Dorsolateral prefrontal cortex (tissue), 120 donors: ENCODE measurements at regions of chr7 and their contacts with region 1.

Region 1: GRCh38 chr7:7424151-7424873 is 111.4 kb downstream of the COL28A1 start:
- DNase-seq: peak in 7 of 10 donors; percentile 25 to 73 (median 55)
- H3K4me3 ChIP-seq: peak overlapping the region in 57 of 59 donors; percentile 28 to 72 (median 54)
- H3K27ac ChIP-seq: peak overlapping the region in 5 of 59 donors; percentile 10 to 75 (median 38)
- H3K27me3 ChIP-seq: no peaks in the 10 kb centered on the region
- CTCF ChIP-seq: peak; percentile 42 to 92 (median 78)

Region 2: GRCh38 chr7:7103343-7104313 is 320.7 kb before region 1 on chr7:
- intact Hi-C with region 1: loop called (anchors 5 to 10 kb)
- DNase-seq: no peak
- H3K4me3 ChIP-seq: peak overlapping the region in 9 of 59 donors; percentile 2 to 25 (median 10)
- H3K27ac ChIP-seq: no peak overlapping the region
- H3K27me3 ChIP-seq: no peaks in the 10 kb centered on the region
- CTCF ChIP-seq: peak; percentile 49 to 83 (median 72)

Region 3: DNA sequence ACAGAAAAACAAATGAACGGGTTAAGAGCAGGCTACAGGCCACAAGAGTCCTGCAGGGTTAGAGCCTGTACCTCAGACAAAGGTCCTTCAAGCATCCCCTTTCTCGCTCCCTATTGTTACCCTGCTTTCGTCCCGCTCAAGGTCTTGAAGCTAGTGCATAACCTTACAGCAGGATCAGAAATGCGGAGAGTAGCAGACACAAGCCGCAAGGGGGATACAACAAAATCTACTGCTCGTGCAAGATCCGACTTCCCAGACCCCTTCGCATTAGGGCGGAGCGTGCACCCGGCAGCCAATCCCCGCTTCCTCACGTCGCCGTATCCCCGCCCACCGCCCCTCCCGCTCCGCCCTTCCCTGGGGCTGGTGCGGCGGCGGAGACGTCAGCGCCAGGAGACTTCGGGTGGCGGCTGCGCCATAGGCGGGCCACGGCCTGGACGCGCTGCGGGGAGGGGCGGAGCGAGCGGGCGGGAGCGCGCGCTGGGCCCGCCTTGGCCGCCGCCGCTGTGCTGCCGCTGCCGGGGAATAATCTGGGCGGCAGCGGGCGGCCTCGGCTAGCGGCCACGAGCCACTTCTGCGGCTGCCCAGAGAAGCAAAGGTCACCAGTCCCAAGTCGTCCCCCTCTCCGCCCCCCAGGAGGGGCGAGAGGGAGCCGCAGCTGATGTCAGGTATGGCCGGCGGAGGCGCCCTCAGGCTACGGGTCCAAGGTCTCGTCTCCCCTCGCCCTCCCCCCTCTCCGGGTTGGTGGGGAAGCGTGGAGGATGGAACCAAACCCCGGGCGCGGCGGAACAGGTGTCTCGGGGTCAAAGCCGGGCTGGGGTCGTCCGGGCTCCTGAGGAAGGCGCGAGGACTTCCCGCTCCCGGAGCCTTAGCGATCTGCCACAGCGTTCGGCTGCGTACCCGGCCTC is 241.9 kb before region 1 on chr7 and contains the start of gene C1GALT1:
- intact Hi-C with region 1: loop called in 1 of 2 experiments (anchors 2 kb)
- DNase-seq: peak; percentile 91 to 98 (median 96)
- H3K4me3 ChIP-seq: peak within 1 kb of the TSS; percentile 58 to 98 (median 91)
- H3K27ac ChIP-seq: peak within 1 kb of the TSS; percentile 85 to 99 (median 98)
- H3K27me3 ChIP-seq: no peaks in the 10 kb centered on the region
- CTCF ChIP-seq: peak in 52 of 56 donors; percentile 7 to 68 (median 44)
- total RNA-seq, gene C1GALT1: 22.2 to 88.2 (median 37.1) TPM

Region 4: DNA sequence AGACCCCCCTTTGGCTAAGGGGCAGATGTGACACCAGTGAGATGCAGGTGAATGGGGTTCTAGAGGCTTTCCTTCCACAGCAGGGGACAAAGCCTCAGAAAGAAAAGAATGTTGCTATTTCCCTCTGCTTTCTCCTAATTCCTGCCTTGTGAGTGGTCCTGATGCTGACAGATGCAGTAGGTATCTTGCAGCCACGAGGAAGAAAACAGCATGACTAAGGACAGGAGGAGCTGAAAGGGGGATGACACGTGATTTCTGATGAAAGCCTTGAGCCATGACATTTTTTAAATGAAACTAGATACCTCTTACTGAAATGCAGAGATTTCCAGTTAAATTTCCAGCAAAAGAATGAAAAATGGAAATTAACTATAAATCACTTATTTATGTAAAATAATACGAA is 149.5 kb before region 1 on chr7:
- intact Hi-C with region 1: no loop called
- DNase-seq: no peak
- H3K4me3 ChIP-seq: no peak overlapping the region
- H3K27ac ChIP-seq: no peak overlapping the region
- H3K27me3 ChIP-seq: no peaks in the 10 kb centered on the region
- CTCF ChIP-seq: no peak

Region 5: GRCh38 chr7:7498856-7499580 is 74.7 kb after region 1 on chr7:
- intact Hi-C with region 1: no loop called
- DNase-seq: no peak
- H3K4me3 ChIP-seq: no peak overlapping the region
- H3K27ac ChIP-seq: no peak overlapping the region
- H3K27me3 ChIP-seq: no peaks in the 10 kb centered on the region
- CTCF ChIP-seq: no peak

Region 6: GRCh38 chr7:7542251-7542835 is 118.0 kb after region 1 on chr7:
- intact Hi-C with region 1: loop called (anchors 5 kb)
- DNase-seq: no peak
- H3K4me3 ChIP-seq: no peak overlapping the region
- H3K27ac ChIP-seq: no peak overlapping the region
- H3K27me3 ChIP-seq: no peaks in the 10 kb centered on the region
- CTCF ChIP-seq: no peak

Region 7: DNA sequence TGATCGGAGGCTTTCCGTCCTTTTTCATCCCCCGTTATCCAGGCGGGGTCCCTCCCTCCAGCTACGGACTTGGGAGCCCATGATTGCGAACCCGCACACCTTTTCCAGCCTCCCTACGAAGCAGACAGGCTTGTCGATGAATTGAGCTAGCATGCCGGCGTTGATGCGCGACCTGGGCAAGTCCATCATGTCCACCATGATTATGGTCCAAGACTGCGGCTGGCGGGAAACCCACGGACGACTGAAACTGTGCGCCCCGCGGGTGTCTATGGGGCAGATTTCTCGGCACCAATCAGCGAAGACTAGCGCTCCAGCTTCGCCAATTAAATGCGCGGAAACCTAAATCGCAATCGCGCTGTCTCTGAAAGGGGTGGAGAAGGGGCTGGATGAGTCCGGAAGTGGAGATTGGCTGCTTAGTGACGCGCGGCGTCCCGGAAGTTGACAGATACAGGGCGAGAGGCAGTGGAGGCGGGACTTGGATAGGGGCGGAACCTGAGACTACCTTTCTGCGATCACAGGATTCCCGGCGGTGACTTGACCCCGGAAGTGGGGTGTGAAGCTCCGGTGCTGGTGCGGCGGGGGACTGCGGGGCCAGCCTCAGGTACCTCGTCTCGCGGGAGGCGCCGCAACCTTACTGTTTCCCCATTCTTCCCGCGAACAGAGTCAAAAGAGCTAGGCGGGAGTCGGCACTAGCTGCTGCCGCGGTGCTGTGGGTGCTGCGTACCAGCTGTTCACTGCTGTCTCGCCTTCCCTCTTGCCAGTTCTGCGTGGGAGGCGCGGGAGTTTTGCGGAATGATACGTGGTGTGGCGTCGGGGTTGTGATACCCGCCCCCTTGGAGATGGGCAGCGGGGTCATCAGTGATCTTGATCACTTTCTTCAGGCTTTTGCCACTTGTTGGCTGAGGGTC is 216.2 kb after region 1 on chr7 and contains the start of gene UMAD1:
- intact Hi-C with region 1: loop called in 1 of 2 experiments (anchors 10 kb)
- DNase-seq: peak; percentile 98 to 100 (median 99)
- H3K4me3 ChIP-seq: peak within 1 kb of the TSS; percentile 68 to 99 (median 89)
- H3K27ac ChIP-seq: peak within 1 kb of the TSS in 58 of 59 donors; percentile 52 to 94 (median 84)
- H3K27me3 ChIP-seq: no peaks in the 10 kb centered on the region
- CTCF ChIP-seq: peak in 19 of 56 donors; percentile 7 to 44 (median 26)
- total RNA-seq, gene UMAD1: 12.6 to 25.1 (median 18.8) TPM

Region 8: DNA sequence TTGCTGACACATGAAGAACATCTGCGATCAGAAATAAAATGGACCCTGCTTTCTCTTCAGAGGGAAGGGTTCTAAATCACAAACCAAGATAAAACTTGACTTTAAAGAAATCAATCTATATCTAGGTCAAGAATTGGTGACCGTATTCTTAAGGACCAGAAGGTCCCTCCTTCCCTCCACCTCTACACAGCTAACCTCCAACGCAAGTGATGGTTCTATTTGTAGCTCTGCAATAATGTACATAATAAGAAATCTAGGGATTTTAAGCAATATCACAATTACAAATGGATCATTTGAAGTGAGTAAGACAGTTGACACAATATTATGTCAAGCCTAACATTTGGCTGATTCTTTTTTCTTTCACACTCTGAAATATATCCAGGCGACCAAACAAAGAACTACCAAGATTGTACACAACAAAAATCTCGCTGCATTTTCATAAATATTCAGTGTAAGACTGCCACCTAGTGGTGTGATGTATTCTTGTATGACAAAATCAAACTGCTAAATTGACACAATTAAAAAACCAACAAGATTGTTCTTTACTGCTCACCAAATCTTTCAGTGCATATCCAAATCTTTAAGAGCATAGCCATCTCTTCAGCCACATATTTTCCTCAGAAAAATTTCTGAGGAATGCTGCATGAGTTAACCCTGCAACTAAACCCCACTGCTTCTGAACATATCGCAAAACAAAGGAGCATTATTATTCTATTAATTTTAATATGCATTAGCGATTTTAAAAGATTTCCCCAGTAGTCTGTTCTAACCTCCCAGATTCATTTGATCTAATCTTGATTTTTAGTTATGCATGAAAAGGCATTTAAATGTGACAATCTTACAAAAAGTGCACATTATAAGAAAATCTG is 793.1 kb after region 1 on chr7:
- intact Hi-C with region 1: loop called in 1 of 2 experiments (anchors 2 kb)
- DNase-seq: no peak
- H3K4me3 ChIP-seq: peak overlapping the region in 27 of 59 donors; percentile 1 to 41 (median 16)
- H3K27ac ChIP-seq: peak overlapping the region in 29 of 59 donors; percentile 2 to 79 (median 34)
- H3K27me3 ChIP-seq: no peaks in the 10 kb centered on the region
- CTCF ChIP-seq: peak; percentile 77 to 100 (median 89)

Region 9: DNA sequence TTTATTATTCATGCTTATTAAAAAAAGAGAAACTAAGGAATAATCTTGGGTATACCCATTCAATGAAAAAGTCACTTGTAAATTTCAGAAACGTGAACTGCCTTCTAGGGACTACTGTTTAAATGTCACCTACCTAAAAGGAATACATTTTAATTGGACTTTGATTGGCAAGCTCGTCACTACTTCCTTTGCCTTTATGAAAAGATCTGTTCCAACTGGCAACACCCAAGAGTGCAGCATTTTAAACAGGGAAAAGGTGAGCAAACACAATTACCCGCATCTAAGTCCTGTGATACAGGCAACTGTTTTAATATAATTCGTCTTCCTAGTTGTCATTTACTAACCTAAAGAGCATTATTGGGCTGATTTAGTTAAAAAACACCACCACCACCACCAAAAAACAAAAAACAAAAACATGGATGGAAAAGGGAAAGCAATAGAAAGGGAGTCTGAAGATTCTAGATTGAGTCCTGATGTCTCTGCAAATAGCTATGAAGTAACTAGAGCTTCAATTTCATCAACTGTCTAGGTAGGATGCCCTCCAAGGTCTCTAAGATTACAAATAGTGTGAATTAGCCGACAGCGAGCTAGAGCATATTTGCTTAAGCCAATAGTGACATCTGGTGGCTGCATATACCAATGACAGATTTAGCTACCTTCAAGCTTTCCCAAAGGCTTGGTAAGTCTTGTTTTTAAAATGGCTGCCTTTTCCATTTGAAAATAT is 871.5 kb after region 1 on chr7:
- intact Hi-C with region 1: loop called in 1 of 2 experiments (anchors 10 kb)
- DNase-seq: peak in 2 of 10 donors; percentile 26 to 49
- H3K4me3 ChIP-seq: no peak overlapping the region
- H3K27ac ChIP-seq: no peak overlapping the region
- H3K27me3 ChIP-seq: no peaks in the 10 kb centered on the region
- CTCF ChIP-seq: peak; percentile 56 to 94 (median 86)